ENCODE measurements at regions of chr5 and their contacts with region 1.

Region 1: GRCh38 chr5:112707187-112708102 is 30.2 kb upstream of the APC start:
- DNase-seq: peak; percentile 96 to 99 (median 98)
- H3K4me3 ChIP-seq: peak overlapping the region; percentile 68 to 100 (median 94)
- H3K27ac ChIP-seq: peak overlapping the region; percentile 68 to 99 (median 96)
- H3K27me3 ChIP-seq: no peaks in the 10 kb centered on the region
- CTCF ChIP-seq: peak in 39 of 56 donors; percentile 4 to 63 (median 37)

Region 2: DNA sequence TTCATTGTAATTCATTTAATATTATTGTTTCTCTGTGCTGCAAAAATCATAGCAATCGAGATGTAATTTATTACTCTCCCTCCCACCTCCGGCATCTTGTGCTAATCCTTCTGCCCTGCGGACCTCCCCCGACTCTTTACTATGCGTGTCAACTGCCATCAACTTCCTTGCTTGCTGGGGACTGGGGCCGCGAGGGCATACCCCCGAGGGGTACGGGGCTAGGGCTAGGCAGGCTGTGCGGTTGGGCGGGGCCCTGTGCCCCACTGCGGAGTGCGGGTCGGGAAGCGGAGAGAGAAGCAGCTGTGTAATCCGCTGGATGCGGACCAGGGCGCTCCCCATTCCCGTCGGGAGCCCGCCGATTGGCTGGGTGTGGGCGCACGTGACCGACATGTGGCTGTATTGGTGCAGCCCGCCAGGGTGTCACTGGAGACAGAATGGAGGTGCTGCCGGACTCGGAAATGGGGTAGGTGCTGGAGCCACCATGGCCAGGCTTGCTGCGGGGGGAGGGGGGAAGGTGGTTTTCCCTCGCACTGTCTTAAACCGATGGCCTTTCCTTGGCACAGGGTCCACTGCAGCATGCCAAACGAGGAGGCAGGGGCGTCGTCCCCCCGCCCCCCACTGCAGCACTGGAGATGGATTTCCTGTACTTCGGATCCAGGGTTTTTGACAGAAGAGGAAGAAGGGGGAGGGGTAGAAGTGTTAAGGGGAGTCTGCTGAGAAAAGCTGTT is 30.2 kb after region 1 on chr5 and contains the start of gene APC:
- intact Hi-C with region 1: loop called (anchors 1 to 2 kb)
- DNase-seq: peak; percentile 95 to 99 (median 99)
- H3K4me3 ChIP-seq: peak within 1 kb of the TSS; percentile 50 to 95 (median 75)
- H3K27ac ChIP-seq: peak within 1 kb of the TSS; percentile 53 to 97 (median 90)
- H3K27me3 ChIP-seq: no peaks in the 10 kb centered on the region
- CTCF ChIP-seq: peak in 22 of 56 donors; percentile 3 to 47 (median 15)
- total RNA-seq, gene APC: 149 to 320 (median 208) TPM

Measured in dorsolateral prefrontal cortex (tissue), 120 donors.